GM10248 (cell line): ENCODE measurements at regions of chr14 and their contacts with region 1.

Region 1: GRCh38 chr14:58501214-58501816 is 73.8 kb downstream of the KIAA0586 start:
- DNase-seq: peak; percentile 43
- CTCF ChIP-seq: peak; percentile 82

Region 2: DNA sequence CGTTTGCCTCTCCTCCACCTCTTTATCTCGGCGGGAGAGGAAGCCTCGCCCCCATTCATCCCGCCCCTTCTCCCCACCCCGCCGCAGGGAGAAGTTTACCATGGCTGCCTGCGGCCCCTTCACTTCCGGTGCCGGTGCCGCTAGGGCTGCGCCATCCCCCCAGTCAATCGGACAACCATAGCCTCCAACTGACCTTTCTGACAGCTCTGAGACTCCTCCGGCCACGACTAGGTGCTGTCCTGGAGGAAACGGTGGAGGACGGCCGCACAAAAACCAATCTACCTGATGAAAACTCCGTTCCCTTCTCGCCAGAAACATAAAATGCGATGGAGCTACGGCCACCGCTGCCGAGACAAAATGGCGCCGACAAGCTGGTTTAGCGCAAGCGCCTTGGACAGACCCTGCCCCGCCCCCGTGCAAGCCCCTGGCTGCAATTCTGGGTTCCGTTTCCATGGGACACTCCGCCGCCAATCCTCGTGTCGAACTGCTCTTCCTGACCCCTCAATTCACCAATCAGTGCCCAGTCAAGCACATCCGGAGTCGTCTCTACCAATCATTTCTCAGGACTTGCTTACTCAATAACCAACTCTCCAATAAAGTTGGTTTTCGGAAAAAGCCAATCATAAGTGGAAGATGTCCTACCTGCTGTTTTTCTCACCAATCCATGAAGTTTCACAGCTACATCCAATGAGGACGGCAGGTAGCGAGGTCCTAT is 203.4 kb before region 1 on chr14:
- CTCF ChIA-PET with region 1: no interaction called
- POLR2A ChIA-PET with region 1: no interaction called
- DNase-seq: peak; percentile 95
- CTCF ChIP-seq: no peak

Region 3: DNA sequence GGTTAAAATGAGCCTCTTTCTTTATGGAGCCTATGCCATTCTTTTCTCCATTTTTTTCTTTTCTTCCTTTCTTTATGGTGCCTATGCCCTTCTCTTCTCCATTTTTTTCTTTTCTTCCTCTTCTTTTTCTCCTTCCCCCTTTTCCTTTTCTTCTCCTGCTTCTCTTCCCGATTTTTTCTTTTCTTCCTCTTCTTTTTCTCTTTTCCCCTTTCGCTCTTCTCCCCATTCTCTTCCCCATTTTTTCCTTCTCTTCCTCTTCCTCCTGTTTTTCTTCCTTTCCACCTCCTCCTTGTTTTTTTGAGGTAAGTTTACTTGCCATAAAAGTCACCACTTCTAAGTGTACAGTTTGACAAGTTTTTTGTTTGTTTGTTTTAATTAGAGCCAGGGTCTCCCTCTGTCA is 23.7 kb before region 1 on chr14:
- CTCF ChIA-PET with region 1: no interaction called
- POLR2A ChIA-PET with region 1: no interaction called
- DNase-seq: no peak
- CTCF ChIP-seq: no peak

Region 4: GRCh38 chr14:58488550-58488949 is 12.8 kb before region 1 on chr14:
- CTCF ChIA-PET with region 1: interaction called, 21 read pairs
- POLR2A ChIA-PET with region 1: no interaction called
- DNase-seq: no peak
- CTCF ChIP-seq: no peak

Region 5: GRCh38 chr14:58557242-58557641 is 55.9 kb after region 1 on chr14:
- CTCF ChIA-PET with region 1: interaction called, 23 read pairs
- POLR2A ChIA-PET with region 1: no interaction called
- DNase-seq: no peak
- CTCF ChIP-seq: no peak

Region 6: GRCh38 chr14:59055439-59056045 is 554.2 kb after region 1 on chr14:
- CTCF ChIA-PET with region 1: interaction called, 15 read pairs
- POLR2A ChIA-PET with region 1: no interaction called
- DNase-seq: peak; percentile 61
- CTCF ChIP-seq: peak; percentile 63

Region 7: GRCh38 chr14:59126710-59127432 is 625.6 kb after region 1 on chr14:
- CTCF ChIA-PET with region 1: interaction called, 14 read pairs
- POLR2A ChIA-PET with region 1: no interaction called
- DNase-seq: peak; percentile 62
- CTCF ChIP-seq: peak; percentile 66